PC-3 (cell line): ENCODE measurements at regions of chr2 and their contacts with region 1.

Region 1: DNA sequence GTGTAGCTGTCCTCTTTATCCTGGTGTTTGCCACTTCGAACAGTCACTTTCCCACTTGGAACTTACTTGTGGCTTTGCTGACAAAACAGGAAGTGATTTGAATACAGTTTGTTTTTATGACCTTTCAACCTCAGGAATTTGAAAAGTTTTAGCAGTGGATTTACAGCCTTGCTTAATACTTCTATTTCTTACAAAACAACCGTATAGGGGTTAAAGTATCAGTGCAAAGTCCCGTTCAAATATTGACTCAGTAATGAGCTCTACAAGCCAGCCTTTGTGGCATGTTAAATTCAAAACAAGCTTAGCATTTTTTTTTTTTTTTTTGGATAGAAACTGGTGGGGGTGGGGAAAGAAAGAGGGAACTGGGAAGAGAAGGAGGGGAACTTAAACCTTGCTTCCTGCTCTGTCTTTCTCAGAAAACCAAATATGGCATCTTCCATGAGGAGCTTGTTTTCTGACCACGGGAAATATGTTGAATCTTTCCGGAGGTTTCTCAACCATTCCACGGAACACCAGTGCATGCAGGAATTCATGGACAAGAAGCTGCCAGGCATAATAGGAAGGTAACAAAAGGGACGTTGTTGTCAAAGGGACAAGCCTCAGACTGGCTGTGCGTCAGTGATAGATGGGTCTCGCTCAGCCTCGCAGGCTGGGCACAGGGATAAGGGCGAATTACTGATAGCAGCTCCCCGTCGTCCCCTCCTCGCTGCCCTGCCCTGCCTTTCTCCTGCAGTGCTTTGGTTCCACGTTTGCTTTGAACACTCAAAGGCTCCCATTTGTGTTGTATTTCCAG is at the start of gene HNMT:
- DNase-seq: peak; percentile 84
- ATAC-seq: peak; percentile 77
- H3K4me3 ChIP-seq: peak within 1 kb of the TSS; percentile 71
- H3K27ac ChIP-seq: peak within 1 kb of the TSS; percentile 75
- H3K4me1 ChIP-seq: peaks cover 42% of the 10 kb centered on the region
- H3K27me3 ChIP-seq: no peaks in the 10 kb centered on the region
- CTCF ChIP-seq: no peak
- total RNA-seq, gene HNMT: 6.9 and 7.1 TPM in 2 replicates

Region 2: GRCh38 chr2:137928547-137929518 is 35.4 kb before region 1 on chr2:
- CTCF ChIA-PET with region 1: no interaction called
- POLR2A ChIA-PET with region 1: no interaction called
- intact Hi-C with region 1: no loop called
- DNase-seq: peak; percentile 72
- ATAC-seq: peak; percentile 33
- H3K4me3 ChIP-seq: no peak overlapping the region
- H3K27ac ChIP-seq: no peak overlapping the region
- H3K4me1 ChIP-seq: peaks cover 5% of the 10 kb centered on the region
- H3K27me3 ChIP-seq: no peaks in the 10 kb centered on the region
- CTCF ChIP-seq: no peak

Region 3: GRCh38 chr2:137947728-137948336 is 16.4 kb before region 1 on chr2:
- CTCF ChIA-PET with region 1: interaction called, 10 read pairs
- POLR2A ChIA-PET with region 1: interaction called, 3 read pairs
- intact Hi-C with region 1: no loop called
- DNase-seq: peak; percentile 84
- ATAC-seq: peak; percentile 63
- H3K4me3 ChIP-seq: no peak overlapping the region
- H3K27ac ChIP-seq: no peak overlapping the region
- H3K4me1 ChIP-seq: peaks cover 6% of the 10 kb centered on the region
- H3K27me3 ChIP-seq: no peaks in the 10 kb centered on the region
- CTCF ChIP-seq: peak; percentile 88

Region 4: DNA sequence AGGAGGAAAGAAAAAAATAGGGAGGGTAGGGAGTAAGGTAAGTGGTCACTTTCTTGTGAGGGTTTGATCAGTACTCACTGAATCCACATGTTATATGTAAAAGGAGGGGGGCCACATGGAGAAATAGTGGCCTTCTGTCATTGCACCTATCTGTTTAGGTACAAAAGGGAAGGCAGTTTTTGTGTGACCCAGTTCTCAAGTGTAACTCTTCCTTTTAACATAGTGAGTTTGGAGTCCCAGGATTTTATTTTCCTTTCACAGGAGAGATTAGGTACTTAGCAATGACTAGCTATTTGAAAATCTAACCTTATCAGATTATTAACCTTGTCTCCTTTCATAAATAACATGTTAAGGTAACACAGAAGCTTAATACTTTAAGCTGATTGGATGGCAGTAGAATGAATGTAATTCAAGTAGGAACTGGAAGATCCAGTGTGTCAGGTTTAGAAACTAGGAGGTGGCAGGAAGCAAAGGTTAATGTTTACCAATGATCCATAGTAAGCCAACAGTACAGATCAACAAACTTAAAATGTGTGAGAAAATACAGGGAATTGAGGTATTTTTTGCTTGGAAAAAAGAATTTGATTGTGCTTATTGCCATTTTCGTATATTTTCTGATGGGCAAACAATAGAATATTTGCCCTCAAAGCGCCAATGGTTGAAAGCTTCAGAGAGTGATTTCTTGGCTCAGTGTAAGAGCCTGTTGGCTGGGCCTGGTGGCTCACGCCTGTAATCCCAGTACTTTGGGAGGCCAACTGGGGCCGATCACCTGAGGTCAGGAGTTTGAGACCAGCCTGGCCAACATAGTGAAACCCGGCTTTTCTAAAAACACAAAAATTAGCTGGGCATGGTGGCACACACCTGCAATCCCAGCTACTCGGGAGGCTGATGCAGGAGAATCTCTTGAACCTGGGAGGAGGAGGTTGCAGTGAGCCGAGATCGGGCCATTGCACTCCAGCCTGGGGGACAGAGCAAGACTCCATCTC is 11.3 kb after region 1 on chr2:
- CTCF ChIA-PET with region 1: interaction called, 10 read pairs
- POLR2A ChIA-PET with region 1: no interaction called
- intact Hi-C with region 1: no loop called
- DNase-seq: peak; percentile 93
- ATAC-seq: peak; percentile 80
- H3K4me3 ChIP-seq: peak overlapping the region; percentile 51; the same call in 1 of the 2 replicates
- H3K27ac ChIP-seq: peak overlapping the region; percentile 80
- H3K4me1 ChIP-seq: peaks cover 31% of the 10 kb centered on the region
- H3K27me3 ChIP-seq: no peaks in the 10 kb centered on the region
- CTCF ChIP-seq: no peak

Region 5: DNA sequence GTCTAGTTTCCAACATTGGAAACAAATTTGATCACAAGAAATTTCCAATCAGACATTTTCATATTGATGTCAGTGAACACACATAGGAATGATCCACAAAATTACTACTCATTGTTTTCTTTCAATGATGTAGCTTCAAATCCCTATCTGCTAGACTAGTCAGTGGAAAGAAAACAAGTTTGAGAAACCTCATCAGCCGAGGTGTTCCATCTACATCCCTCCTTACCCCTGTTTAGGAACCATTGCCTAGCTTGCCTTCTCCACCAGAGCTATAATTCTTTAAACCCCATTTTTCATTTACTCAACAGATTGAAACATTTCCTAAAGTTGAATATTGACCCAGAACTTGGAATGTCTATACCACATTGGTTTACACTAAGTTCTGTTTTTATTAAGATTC is 45.4 kb after region 1 on chr2:
- CTCF ChIA-PET with region 1: interaction called, 11 read pairs
- POLR2A ChIA-PET with region 1: no interaction called
- intact Hi-C with region 1: no loop called
- DNase-seq: no peak
- ATAC-seq: no peak
- H3K4me3 ChIP-seq: no peak overlapping the region
- H3K27ac ChIP-seq: no peak overlapping the region
- H3K4me1 ChIP-seq: no peaks in the 10 kb centered on the region
- H3K27me3 ChIP-seq: no peaks in the 10 kb centered on the region
- CTCF ChIP-seq: no peak